Endothelial cell of umbilical vein (primary cell): ENCODE measurements at regions of chr11 and their contacts with region 1.

Region 1: DNA sequence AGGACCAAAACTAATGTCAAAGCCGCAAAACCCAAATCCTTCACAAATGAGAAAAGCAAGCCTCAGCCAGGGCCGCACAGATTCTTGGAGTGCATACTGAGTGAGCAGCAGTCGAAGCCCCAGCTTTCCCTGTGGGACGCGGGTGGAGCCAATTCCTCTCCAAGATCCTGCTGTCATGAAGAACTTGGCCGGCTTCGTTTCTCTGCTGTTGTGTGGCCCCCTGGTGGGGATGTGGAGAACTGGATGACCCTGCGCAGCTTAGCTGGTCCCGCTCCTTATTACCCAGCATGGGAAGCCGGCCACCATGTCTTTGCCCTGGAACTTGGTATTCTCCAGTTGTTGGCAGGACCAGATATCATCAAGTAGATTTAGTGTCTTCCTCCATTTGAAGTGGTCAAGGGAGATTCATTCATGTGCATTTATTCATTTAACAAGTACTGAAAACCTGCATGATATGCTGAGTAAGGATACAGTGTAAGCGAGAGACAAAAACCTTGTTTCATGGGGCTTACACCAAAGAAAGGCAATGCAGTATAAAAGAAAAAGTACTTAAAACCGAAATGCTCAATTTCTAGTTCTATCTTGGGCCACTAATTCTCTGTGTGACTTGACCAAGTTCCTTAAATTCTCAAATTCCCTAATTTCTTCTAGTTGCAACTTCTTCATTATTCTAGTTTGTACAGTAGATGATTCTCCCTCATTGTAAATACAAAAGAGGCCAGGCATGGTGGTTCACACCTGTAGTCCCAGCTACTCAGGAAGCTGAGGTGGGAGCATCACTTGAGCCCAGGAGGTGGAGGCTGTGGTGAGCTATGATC is 56.7 kb upstream of the CRTAM start:
- DNase-seq: peak; percentile 90
- H3K4me3 ChIP-seq: no peak overlapping the region
- H3K27ac ChIP-seq: no peak overlapping the region
- H3K4me1 ChIP-seq: peaks cover 33% of the 10 kb centered on the region
- H3K27me3 ChIP-seq: no peaks in the 10 kb centered on the region
- CTCF ChIP-seq: peak; percentile 92 to 94
- POLR2A ChIP-seq: no peak

Region 2: DNA sequence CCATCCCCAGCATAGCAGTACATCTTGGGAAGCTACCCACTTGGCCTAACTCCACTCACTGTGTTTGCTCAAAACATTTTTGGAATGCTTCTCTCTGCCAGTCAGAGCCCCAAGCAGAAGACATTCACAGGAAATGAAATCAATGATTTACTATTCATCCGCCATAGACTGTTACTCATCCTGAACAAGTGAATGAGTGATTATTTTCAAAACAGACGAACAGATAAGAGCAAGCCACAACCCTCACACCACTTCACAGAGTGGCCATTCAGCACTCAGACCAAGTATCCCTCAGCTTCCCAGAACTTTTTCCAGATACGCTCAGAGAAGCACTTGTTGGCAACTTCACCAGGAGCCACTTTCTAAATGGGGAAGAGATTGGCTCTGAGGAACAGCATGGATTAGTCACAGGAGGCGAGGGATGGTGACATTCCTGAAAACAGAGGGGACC is 139.1 kb before region 1 on chr11:
- CTCF ChIA-PET with region 1: interaction called, 493 read pairs
- POLR2A ChIA-PET with region 1: no interaction called
- dilution Hi-C with region 1: no loop called
- intact Hi-C with region 1: no loop called
- DNase-seq: peak; percentile 60
- H3K4me3 ChIP-seq: no peak overlapping the region
- H3K27ac ChIP-seq: peak overlapping the region; percentile 69
- H3K4me1 ChIP-seq: peaks cover 26% of the 10 kb centered on the region
- H3K27me3 ChIP-seq: no peaks in the 10 kb centered on the region
- CTCF ChIP-seq: no peak
- POLR2A ChIP-seq: peak; percentile 25

Region 3: DNA sequence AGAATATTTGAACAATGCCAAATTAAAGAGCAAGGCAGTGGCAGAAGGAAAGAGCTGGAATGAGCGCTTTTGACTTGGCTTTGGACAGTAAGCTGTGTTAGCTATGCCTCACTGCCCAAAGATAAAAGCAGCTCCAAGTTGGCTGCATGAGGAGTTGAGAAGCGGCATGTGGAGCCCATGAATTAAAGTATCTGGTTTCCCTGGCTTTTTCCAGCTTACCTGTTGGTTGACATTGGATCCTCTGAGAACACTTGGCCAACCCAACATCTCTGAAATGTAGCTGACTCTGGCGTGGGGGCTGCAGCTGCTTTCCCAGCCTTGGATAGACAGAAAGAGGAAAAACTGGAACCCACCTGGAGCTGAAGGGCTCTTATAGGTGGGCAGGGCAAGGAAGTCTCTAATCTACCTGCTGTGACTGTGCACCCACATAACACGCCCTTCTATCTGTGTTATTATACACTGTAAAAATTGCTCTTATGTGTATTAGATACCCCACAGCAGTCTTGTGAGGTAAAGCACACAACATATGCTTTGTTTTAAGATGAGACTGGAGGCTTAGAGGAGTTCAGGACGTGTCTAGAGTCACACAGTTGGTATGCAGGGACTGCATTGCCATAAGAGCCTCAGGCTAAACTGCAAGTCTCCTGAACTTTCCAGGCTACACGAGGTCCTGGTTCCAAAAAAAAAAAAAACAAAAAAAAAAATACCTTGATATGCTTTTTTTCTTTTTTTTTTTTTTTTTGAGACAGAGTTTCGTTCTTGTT is 120.2 kb before region 1 on chr11:
- CTCF ChIA-PET with region 1: interaction called, 59 read pairs
- POLR2A ChIA-PET with region 1: interaction called, 4 read pairs
- dilution Hi-C with region 1: no loop called
- intact Hi-C with region 1: no loop called
- DNase-seq: no peak
- H3K4me3 ChIP-seq: no peak overlapping the region
- H3K27ac ChIP-seq: no peak overlapping the region
- H3K4me1 ChIP-seq: peaks cover 2% of the 10 kb centered on the region
- H3K27me3 ChIP-seq: no peaks in the 10 kb centered on the region
- CTCF ChIP-seq: no peak
- POLR2A ChIP-seq: no peak

Region 4: GRCh38 chr11:122711831-122712381 is 69.7 kb before region 1 on chr11:
- CTCF ChIA-PET with region 1: interaction called, 76 read pairs
- POLR2A ChIA-PET with region 1: interaction called, 4 read pairs
- dilution Hi-C with region 1: no loop called
- intact Hi-C with region 1: loop called (anchors 1 kb)
- DNase-seq: peak; percentile 98
- H3K4me3 ChIP-seq: no peak overlapping the region
- H3K27ac ChIP-seq: peak overlapping the region; percentile 48
- H3K4me1 ChIP-seq: peaks cover 35% of the 10 kb centered on the region
- H3K27me3 ChIP-seq: no peaks in the 10 kb centered on the region
- CTCF ChIP-seq: peak; percentile 37 to 42
- POLR2A ChIP-seq: peak; percentile 61

Region 5: GRCh38 chr11:122754553-122755322 is 26.8 kb before region 1 on chr11:
- CTCF ChIA-PET with region 1: interaction called, 34 read pairs
- POLR2A ChIA-PET with region 1: interaction called, 8 read pairs
- dilution Hi-C with region 1: no loop called
- intact Hi-C with region 1: no loop called
- DNase-seq: no peak
- H3K4me3 ChIP-seq: no peak overlapping the region
- H3K27ac ChIP-seq: no peak overlapping the region
- H3K4me1 ChIP-seq: peaks cover 33% of the 10 kb centered on the region
- H3K27me3 ChIP-seq: no peaks in the 10 kb centered on the region
- CTCF ChIP-seq: peak; percentile 36 to 37
- POLR2A ChIP-seq: no peak

Region 6: GRCh38 chr11:122796128-122796717 is 14.6 kb after region 1 on chr11:
- CTCF ChIA-PET with region 1: interaction called, 17 read pairs
- POLR2A ChIA-PET with region 1: no interaction called
- dilution Hi-C with region 1: no loop called
- intact Hi-C with region 1: no loop called
- DNase-seq: peak; percentile 42
- H3K4me3 ChIP-seq: no peak overlapping the region
- H3K27ac ChIP-seq: no peak overlapping the region
- H3K4me1 ChIP-seq: peaks cover 7% of the 10 kb centered on the region
- H3K27me3 ChIP-seq: no peaks in the 10 kb centered on the region
- CTCF ChIP-seq: peak; percentile 78 to 81
- POLR2A ChIP-seq: no peak